Panc1 (cell line): ENCODE measurements at regions of chr9 and their contacts with region 1.

Region 1: DNA sequence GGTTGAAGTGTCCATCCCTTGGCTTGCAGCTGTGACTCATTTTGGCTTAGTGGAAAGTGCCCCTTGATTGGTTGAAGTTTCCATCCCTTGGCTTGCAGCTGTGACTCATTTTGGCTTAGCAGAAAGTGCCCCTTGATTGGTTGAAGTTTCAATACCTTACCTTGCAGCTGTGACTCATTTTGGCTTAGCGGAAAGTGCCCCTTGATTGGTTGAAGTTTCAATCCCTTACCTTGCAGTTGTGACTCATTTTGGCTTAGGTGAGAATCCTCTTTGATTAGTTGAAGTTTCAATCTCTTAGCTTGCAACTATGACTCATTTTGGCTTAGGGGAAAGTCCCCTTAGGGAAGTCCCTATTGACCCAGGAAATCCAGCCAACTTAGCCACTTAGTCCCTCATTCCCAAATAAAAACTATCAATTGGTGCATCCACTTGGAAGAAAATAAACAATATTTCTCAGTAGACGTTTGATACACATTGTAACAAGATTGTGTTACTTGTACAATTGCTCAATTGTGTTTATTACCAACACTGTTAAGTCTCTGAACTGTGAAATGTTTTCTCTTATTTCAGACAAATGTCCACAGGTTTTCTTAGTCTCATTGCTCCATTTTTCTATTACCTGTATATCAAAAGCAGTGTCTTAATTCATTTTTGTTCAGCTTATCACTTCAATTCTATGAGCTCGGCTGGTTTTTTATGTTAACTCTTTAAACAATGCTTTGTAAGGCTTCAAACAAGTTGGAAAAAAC is 2308.8 kb upstream of the ACO1 start:
- DNase-seq: no peak
- ATAC-seq: no peak
- H3K4me3 ChIP-seq: no peak overlapping the region
- H3K27ac ChIP-seq: no peak overlapping the region
- H3K4me1 ChIP-seq: no peaks in the 10 kb centered on the region
- H3K27me3 ChIP-seq: no peaks in the 10 kb centered on the region
- CTCF ChIP-seq: no peak

Region 2: GRCh38 chr9:30058463-30058862 is 17.2 kb before region 1 on chr9:
- CTCF ChIA-PET with region 1: no interaction called
- POLR2A ChIA-PET with region 1: no interaction called
- in situ Hi-C with region 1: no loop called
- intact Hi-C with region 1: loop called (anchors 2 kb)
- DNase-seq: no peak
- ATAC-seq: no peak
- H3K4me3 ChIP-seq: no peak overlapping the region
- H3K27ac ChIP-seq: no peak overlapping the region
- H3K4me1 ChIP-seq: no peaks in the 10 kb centered on the region
- H3K27me3 ChIP-seq: no peaks in the 10 kb centered on the region
- CTCF ChIP-seq: no peak

Region 3: GRCh38 chr9:30913331-30913730 is 837.7 kb after region 1 on chr9:
- CTCF ChIA-PET with region 1: no interaction called
- POLR2A ChIA-PET with region 1: no interaction called
- in situ Hi-C with region 1: no loop called
- intact Hi-C with region 1: no loop called
- DNase-seq: no peak
- ATAC-seq: no peak
- H3K4me3 ChIP-seq: no peak overlapping the region
- H3K27ac ChIP-seq: no peak overlapping the region
- H3K4me1 ChIP-seq: no peaks in the 10 kb centered on the region
- H3K27me3 ChIP-seq: no peaks in the 10 kb centered on the region
- CTCF ChIP-seq: no peak